Vagina (tissue), 2 donors: ENCODE measurements at regions of chr7 and their contacts with region 1.

Region 1: GRCh38 chr7:55365675-55366460 is 731 bp downstream of the LANCL2 start:
- DNase-seq: peak in 1 of 2 donors; percentile 94
- H3K4me3 ChIP-seq: peak overlapping the region; percentile 57 to 74
- H3K27ac ChIP-seq: peak overlapping the region; percentile 94
- H3K4me1 ChIP-seq: peaks cover 20% of the 10 kb centered on the region
- H3K27me3 ChIP-seq: no peaks in the 10 kb centered on the region
- CTCF ChIP-seq: peak in 1 of 3 experiments; percentile 9
- POLR2A ChIP-seq: peak in 1 of 2 donors; percentile 64

Region 2: GRCh38 chr7:55400191-55400590 is 34.3 kb after region 1 on chr7:
- intact Hi-C with region 1: no loop called
- DNase-seq: no peak
- H3K4me3 ChIP-seq: no peak overlapping the region
- H3K27ac ChIP-seq: no peak overlapping the region
- H3K4me1 ChIP-seq: no peaks in the 10 kb centered on the region
- H3K27me3 ChIP-seq: no peaks in the 10 kb centered on the region
- CTCF ChIP-seq: no peak
- POLR2A ChIP-seq: no peak

Region 3: GRCh38 chr7:56051339-56052191 is 685.7 kb after region 1 on chr7 and contains the starts of genes CCT6A and PSPH:
- intact Hi-C with region 1: loop called (anchors 5 kb)
- DNase-seq: peak in 1 of 2 donors; percentile 99
- H3K4me3 ChIP-seq: peak within 1 kb of the TSS; percentile 59 to 89
- H3K27ac ChIP-seq: peak within 1 kb of the TSS; percentile 90
- H3K4me1 ChIP-seq: peaks cover 46% of the 10 kb centered on the region
- H3K27me3 ChIP-seq: no peaks in the 10 kb centered on the region
- CTCF ChIP-seq: peak in 1 of 3 experiments; percentile 16
- POLR2A ChIP-seq: peak in 1 of 2 donors; percentile 49
- total RNA-seq, gene CCT6A: 82.0 TPM
- total RNA-seq, gene PSPH: 13.3 TPM

Region 4: DNA sequence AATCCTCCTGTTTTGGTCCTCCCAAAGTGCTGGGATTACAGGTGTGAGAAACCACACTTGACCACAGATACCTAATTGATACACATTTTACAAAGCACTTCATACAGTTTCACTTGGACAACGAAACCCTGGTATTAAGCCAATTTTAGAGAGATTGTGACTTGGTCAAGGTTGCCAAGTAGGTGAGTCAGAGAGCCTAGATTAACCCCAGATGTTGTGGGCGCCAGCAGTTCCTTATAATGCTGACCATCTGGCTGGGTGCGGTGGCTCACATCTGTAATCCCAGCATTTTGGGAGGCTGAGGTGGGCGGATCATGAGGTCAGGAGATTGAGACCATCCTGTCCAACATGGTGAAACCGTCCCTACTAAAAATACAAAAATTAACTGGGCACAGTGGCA is 731.8 kb after region 1 on chr7:
- intact Hi-C with region 1: no loop called
- DNase-seq: no peak
- H3K4me3 ChIP-seq: no peak overlapping the region
- H3K27ac ChIP-seq: no peak overlapping the region
- H3K4me1 ChIP-seq: peaks cover 10% of the 10 kb centered on the region
- H3K27me3 ChIP-seq: no peaks in the 10 kb centered on the region
- CTCF ChIP-seq: no peak
- POLR2A ChIP-seq: no peak